Aorta (tissue), 5 donors: ENCODE measurements at regions of chr2 and their contacts with region 1.

Region 1: DNA sequence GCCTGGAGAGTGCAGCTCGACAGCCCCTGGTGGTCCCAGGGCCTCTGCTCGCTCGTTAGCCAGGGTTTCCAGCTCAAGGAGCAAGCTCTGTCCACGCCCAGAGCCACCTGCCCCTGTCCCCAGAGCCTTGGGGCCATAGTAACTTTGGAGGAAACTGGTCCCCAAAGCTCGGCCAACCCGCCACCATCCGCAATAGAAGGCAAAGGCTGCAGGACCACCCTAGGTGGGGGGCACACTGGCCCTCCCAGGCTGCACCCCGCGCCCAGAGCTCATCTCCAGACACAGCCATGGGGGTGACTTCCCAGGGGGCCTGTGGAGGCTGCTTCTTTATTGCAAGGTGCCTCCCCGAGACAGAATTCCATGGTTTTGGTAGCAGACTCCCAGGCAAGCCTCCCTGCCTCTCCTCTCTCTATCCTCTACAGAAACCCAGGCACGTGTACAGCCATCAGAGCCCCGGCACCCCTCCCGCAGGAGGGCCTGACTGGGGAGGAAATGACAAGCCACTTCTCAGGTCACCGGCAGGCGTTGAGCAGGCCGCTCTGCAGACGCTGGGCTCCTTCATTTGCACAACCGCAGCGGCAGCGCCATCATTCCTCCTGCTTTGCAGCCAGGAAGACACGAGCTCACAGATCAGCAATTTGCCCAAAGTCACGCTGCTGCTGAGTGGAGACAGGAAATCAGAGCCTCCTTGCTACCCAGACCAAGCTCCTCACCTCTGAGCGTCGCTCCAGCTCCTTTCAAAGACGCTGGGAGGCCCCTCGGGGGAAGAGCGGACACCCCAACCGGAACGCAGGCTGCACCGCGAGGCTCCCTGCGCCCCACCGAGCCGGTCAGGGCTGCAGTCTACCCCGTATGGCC is 80.2 kb downstream of the NDUFA10 start:
- DNase-seq: peak; percentile 75 to 80
- ATAC-seq: no peak
- H3K4me3 ChIP-seq: no peak overlapping the region
- H3K27ac ChIP-seq: no peak overlapping the region
- H3K4me1 ChIP-seq: no peaks in the 10 kb centered on the region
- H3K27me3 ChIP-seq: no peaks in the 10 kb centered on the region

Region 2: DNA sequence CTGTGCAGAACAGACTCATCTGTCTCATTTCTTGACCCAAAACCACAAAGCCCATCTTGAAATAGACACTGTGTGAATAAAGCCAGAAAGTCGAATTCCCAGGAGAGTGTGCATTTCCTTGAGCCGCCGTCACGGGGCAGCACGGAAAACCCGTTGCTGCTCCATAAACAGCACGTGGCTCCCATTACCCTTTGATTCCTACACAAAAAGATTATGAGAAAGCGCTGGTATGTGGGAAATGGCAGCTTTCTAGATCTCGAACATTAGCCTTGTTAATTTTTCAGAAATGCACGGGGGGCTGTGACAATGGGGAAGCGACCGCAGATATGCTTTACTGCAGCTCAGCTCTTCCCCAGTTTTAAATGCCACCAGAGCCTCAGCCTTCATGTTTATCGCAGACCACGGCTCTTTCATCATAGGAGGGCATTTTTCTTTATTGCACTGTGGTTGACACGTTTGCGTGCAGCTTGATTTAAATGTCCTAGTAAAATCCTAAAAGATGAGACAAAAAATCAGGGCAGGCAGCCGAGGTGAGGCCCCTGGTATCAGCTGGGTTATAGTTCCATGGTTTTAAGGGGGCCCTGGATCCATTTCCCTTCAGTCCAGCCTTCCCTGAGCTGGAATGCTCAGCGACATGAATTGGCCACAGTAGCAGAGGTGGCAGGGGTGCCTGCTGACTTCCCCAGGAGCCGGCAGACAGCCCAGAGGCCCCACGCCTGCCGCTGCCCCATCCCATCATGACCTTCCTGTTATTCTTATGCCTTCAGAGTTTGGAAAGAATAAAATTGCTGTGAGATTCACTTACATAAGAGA is 169.1 kb before region 1 on chr2:
- intact Hi-C with region 1: no loop called
- DNase-seq: peak in 1 of 2 donors; percentile 63
- ATAC-seq: no peak
- H3K4me3 ChIP-seq: no peak overlapping the region
- H3K27ac ChIP-seq: no peak overlapping the region
- H3K4me1 ChIP-seq: no peaks in the 10 kb centered on the region
- H3K27me3 ChIP-seq: no peaks in the 10 kb centered on the region

Region 3: DNA sequence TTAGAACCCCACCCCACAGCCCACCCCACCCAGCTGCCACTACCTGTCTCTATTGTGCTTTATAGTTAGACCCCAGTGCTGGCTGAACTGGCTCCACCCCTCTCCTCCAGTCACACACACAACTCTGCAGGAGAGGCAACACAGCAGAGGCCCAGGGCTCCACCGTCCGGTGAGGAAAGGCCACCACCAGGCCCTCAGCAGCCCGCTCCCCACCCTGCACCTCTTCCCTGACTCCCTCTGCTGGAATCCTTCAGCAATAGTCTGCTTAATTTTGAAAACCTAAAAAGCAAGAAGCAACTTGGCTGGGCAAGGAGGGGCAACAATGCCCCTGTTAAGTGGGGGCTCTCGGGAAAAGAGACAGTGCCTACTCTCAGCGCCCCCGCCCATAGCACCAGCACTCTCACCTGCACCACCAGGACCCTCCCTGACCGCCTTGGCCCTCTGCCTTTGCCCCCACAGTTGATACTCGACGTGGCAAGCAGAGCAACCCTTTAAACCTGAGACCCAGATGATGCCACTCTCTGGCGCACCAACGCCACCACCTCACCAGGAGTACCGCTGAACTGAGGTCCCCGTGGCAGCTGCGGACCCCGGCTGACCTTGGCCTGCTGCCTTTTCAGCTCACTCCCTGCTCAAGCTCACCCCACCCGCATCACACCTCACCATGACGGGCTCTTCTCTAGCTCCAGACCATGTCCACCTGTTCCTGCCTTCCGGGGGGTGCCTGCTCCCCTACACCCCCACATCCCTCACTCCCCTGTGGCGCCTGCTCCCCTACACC is 34.5 kb after region 1 on chr2:
- intact Hi-C with region 1: loop called in 1 of 2 experiments (anchors 5 kb)
- DNase-seq: no peak
- ATAC-seq: peak; percentile 76
- H3K4me3 ChIP-seq: no peak overlapping the region
- H3K27ac ChIP-seq: no peak overlapping the region
- H3K4me1 ChIP-seq: no peaks in the 10 kb centered on the region
- H3K27me3 ChIP-seq: no peaks in the 10 kb centered on the region